Activated T-helper 2 cell treated with anti-CD3 and anti-CD28 coated beads, Interferon-gamma antibody, Interleukin-2, Interleukin-4, amounts not matched to agents 10 μg/mL and 5 μg/mL and 100 μg/mL, durations not matched to agents 14 hours and 24 hours and 36 hours (primary cell): ENCODE measurements at regions of chr1 and their contacts with region 1.

Region 1: GRCh38 chr1:180168786-180169639 is 14.3 kb downstream of the QSOX1 start:
- DNase-seq: no peak
- H3K4me3 Mint-ChIP-seq: no peak overlapping the region
- H3K27ac Mint-ChIP-seq: no peak overlapping the region
- H3K4me1 Mint-ChIP-seq: peaks cover 2% of the 10 kb centered on the region
- H3K27me3 Mint-ChIP-seq: no peaks in the 10 kb centered on the region

Region 2: DNA sequence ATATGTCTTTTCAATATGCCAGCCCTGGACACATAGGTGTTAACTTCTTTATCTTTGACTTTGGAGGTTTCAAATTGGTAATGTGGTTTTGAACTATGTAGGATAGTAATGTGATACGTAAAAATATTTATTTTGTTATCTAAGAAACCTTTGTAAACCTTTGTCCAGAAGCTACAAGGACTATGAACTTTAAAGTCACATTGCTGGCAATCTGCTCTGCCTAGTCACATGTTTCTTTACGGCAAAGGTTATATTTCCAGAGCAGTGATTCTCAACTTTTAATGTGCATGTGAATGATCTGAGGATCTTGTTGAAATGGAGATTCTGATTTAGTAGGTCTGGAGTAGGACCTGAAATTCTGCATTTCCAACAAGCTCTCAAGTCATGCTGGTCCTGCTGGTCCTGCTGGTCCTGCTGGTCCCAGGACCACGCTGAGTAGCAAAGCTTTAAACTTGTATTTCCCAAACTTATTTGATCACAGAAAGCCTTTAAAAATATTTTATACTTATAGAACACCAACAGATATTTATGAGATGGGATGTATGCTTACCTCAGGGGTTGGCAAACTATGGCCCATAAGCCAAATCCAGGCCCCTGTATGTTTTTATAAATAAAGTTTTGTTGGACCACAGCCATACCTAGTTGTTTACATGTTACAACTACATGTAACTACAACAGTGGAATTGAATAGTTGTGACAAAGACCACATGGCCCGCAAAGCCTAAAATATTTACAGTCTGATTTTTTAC is 72.3 kb before region 1 on chr1:
- intact Hi-C with region 1: no loop called
- DNase-seq: no peak
- H3K4me3 Mint-ChIP-seq: no peak overlapping the region
- H3K27ac Mint-ChIP-seq: no peak overlapping the region
- H3K4me1 Mint-ChIP-seq: peaks cover 17% of the 10 kb centered on the region
- H3K27me3 Mint-ChIP-seq: no peaks in the 10 kb centered on the region

Region 3: DNA sequence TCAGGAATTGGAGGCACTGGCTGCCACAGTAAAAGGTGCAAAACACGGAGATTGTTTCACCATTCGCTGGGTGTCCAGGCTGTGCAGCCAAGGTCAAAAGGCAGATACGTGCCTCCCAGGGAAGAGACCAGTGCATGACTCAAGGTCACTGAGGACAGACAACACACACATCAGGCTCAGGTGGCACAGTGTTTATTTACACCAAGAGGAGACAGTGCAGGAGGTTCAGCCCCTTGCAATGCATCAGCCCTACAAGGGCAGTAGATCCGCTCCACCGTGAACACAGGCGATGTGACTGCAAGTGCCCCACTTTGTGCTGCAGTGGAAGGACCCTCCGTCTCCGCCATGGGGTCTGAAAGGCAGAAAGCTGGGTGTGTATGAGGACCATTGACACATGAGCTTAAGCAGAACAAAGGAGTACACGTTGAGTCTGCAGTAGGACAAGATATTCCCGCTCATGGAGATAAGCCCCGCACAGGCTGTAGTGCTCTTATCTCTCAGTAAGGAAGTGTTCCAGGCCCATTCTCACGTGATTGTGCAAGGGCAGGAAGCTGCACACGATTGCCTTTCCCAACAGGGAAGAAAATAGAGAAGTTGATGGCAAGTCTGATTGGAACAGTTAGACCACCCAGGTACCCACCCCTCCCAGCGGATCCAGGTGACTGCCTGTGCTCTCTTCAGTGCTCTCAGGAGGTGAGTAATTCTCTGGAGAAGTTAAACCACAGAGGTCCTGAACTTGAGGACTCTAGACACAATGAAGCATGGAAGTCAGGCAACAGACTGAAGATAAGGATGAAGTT is 51.8 kb before region 1 on chr1:
- intact Hi-C with region 1: loop called (anchors 5 kb)
- DNase-seq: no peak
- H3K4me3 Mint-ChIP-seq: no peak overlapping the region
- H3K27ac Mint-ChIP-seq: no peak overlapping the region
- H3K4me1 Mint-ChIP-seq: no peaks in the 10 kb centered on the region
- H3K27me3 Mint-ChIP-seq: no peaks in the 10 kb centered on the region